Panc1 (cell line): ENCODE measurements at regions of chr9 and their contacts with region 1.

Region 1: DNA sequence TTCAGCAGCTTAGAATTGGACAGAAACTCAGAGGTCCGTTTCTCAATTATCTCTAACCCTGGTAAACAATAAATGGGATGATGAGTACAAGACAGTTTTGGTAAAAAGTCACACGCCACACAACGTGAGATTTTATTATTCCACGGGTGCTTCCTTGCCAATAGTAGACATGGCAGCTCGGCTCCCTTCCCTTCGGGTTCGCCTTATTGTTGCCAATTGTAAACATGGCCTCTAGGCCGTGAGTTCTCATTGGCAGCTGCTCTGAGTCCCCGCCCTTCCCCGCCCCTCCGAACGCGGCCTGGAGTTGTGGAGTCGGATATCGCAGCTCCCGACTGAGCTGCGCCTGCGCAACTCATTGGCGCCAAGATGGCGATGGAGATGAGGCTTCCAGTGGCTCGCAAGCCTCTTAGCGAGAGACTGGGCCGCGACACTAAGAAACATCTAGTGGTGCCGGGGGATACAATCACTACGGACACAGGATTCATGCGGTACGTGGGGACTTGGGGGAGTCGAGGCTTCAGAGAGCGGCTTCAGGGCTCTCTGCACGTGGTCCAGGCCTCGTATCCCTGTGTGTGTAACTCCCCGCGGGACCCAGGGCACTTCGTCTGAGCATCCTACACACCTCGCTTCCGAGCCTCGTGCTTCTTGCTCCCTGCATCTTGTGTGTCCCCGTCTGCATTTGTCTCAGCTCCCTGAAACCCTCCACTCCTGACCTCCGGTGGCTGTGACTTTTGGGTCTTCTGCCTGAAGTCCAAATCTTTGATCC is at the start of gene EXOSC2:
- DNase-seq: peak; percentile 87
- ATAC-seq: peak; percentile 96
- H3K4me3 ChIP-seq: peak within 1 kb of the TSS; percentile 83 to 99
- H3K27ac ChIP-seq: peak within 1 kb of the TSS; percentile 97
- H3K4me1 ChIP-seq: no peaks in the 10 kb centered on the region; the same call in 1 of the 2 replicates
- H3K27me3 ChIP-seq: no peaks in the 10 kb centered on the region
- CTCF ChIP-seq: no peak
- total RNA-seq, gene EXOSC2: 41.0 TPM

Region 2: GRCh38 chr9:130527651-130528310 is 165.8 kb before region 1 on chr9:
- CTCF ChIA-PET with region 1: interaction called, 10 read pairs
- POLR2A ChIA-PET with region 1: no interaction called
- in situ Hi-C with region 1: no loop called
- intact Hi-C with region 1: no loop called
- DNase-seq: no peak
- ATAC-seq: no peak
- H3K4me3 ChIP-seq: no peak overlapping the region
- H3K27ac ChIP-seq: no peak overlapping the region
- H3K4me1 ChIP-seq: no peaks in the 10 kb centered on the region; the same call in 1 of the 2 replicates
- H3K27me3 ChIP-seq: no peaks in the 10 kb centered on the region
- CTCF ChIP-seq: no peak